SK-N-SH (cell line): ENCODE measurements at regions of chr17 and their contacts with region 1.

Region 1: GRCh38 chr17:43760254-43760852 is 1.8 kb upstream of the SOST start:
- DNase-seq: peak; percentile 94
- H3K4me3 ChIP-seq: peak overlapping the region in 1 of 2 experiments; percentile 45; a peak in 1 of 4 replicates
- H3K27ac ChIP-seq: no peak overlapping the region
- H3K4me1 ChIP-seq: peaks cover 0 to 6% of the 10 kb centered on the region in 2 experiments; a peak in 1 of 4 replicates
- H3K27me3 ChIP-seq: no peaks in the 10 kb centered on the region
- CTCF ChIP-seq: peak; percentile 99
- EP300 ChIP-seq: no peak
- RAD21 ChIP-seq: peak; percentile 100

Region 2: GRCh38 chr17:43720311-43721060 is 39.9 kb before region 1 on chr17:
- CTCF ChIA-PET with region 1: interaction called, 11 read pairs
- POLR2A ChIA-PET with region 1: no interaction called
- DNase-seq: peak; percentile 93
- H3K4me3 ChIP-seq: peak overlapping the region; percentile 47 to 51
- H3K27ac ChIP-seq: peak overlapping the region in 1 of 2 experiments; percentile 60; a peak in 1 of 4 replicates
- H3K4me1 ChIP-seq: peaks cover 4 to 5% of the 10 kb centered on the region in 2 experiments; a peak in 2 of 4 replicates
- H3K27me3 ChIP-seq: no peaks in the 10 kb centered on the region
- CTCF ChIP-seq: no peak
- EP300 ChIP-seq: no peak
- RAD21 ChIP-seq: no peak

Region 3: DNA sequence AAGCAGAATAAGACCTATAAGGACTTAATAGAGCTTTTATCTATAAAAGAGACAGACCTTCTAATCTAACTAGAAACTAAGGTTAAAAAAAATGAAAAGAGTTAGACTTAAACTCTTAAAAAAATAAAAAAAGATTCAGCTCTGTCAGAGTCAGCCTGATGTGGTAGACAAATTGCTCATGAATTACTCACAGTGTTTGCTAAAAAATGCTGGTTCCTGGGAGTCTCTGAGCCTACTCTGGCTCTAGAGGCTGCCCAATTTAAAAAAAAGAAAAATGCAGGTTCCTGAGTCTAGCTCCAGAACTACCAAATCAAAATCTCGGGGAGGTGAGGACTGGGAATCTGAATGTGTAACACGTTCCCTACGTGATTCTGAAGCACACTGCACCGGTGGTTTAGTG is 19.8 kb before region 1 on chr17:
- CTCF ChIA-PET with region 1: interaction called, 54 read pairs
- POLR2A ChIA-PET with region 1: no interaction called
- DNase-seq: no peak
- H3K4me3 ChIP-seq: no peak overlapping the region
- H3K27ac ChIP-seq: peak overlapping the region in 1 of 2 experiments; percentile 61; a peak in 2 of 4 replicates
- H3K4me1 ChIP-seq: 0 out of 4 replicates have a peak, but pooled peaks cover 0 to 3% of the 10 kb centered on the region in 2 experiments
- H3K27me3 ChIP-seq: no peaks in the 10 kb centered on the region
- CTCF ChIP-seq: no peak
- EP300 ChIP-seq: no peak
- RAD21 ChIP-seq: no peak

Region 4: GRCh38 chr17:43750154-43750553 is 10.2 kb before region 1 on chr17:
- CTCF ChIA-PET with region 1: interaction called, 54 read pairs
- POLR2A ChIA-PET with region 1: interaction called, 3 read pairs
- DNase-seq: no peak
- H3K4me3 ChIP-seq: no peak overlapping the region
- H3K27ac ChIP-seq: no peak overlapping the region
- H3K4me1 ChIP-seq: no peaks in the 10 kb centered on the region; a peak in 1 of 4 replicates
- H3K27me3 ChIP-seq: no peaks in the 10 kb centered on the region
- CTCF ChIP-seq: no peak
- EP300 ChIP-seq: no peak
- RAD21 ChIP-seq: no peak

Region 5: DNA sequence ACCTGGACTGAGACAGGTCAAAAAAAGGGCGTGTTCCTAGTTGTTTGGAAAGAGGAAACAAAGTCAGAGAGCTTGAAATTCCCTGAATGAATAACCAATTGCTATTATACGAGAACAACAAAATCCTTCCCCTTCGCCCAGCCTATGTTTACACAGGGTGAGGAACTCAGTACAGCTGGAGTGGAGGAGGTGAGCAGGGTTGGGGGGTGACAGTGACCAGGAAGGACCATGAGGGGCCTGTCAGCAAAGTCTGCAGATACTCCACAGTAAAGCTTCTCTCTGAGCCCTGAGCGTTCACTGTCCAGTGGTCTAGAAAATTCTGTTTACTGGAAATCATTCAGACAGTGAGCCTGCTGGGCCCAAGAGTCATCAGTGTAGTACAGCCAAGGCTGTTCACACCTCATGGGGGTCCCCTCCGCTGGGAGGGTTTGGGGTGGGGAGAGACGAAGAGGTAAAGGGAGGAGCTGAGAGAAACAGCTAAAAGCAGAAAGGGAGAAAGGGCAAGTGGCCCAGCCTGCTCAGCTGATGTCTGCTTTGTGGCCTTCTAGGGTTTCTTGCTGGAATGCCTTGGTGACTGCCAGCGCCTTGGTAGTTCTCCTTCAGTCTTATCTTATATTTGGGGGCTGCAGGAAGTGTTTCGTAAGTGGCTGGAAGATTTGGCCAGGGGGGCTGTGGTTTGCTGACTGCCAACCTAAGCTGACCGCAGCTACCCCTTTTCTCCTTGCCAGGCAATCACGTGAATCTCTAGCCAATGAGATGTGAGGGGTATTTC is 12.7 kb after region 1 on chr17:
- CTCF ChIA-PET with region 1: interaction called, 19 read pairs
- POLR2A ChIA-PET with region 1: no interaction called
- DNase-seq: no peak
- H3K4me3 ChIP-seq: no peak overlapping the region
- H3K27ac ChIP-seq: no peak overlapping the region
- H3K4me1 ChIP-seq: peaks cover 2 to 8% of the 10 kb centered on the region in 2 experiments; a peak in 1 of 4 replicates
- H3K27me3 ChIP-seq: no peaks in the 10 kb centered on the region
- CTCF ChIP-seq: no peak
- EP300 ChIP-seq: no peak
- RAD21 ChIP-seq: no peak

Region 6: GRCh38 chr17:43778337-43779144 is 18.2 kb after region 1 on chr17 and contains the start of gene DUSP3:
- CTCF ChIA-PET with region 1: interaction called, 17 read pairs
- POLR2A ChIA-PET with region 1: interaction called, 3 read pairs
- DNase-seq: peak; percentile 97
- H3K4me3 ChIP-seq: peak within 1 kb of the TSS; percentile 77 to 84
- H3K27ac ChIP-seq: peak within 1 kb of the TSS; percentile 90 to 95
- H3K4me1 ChIP-seq: peaks cover 8% of the 10 kb centered on the region in 2 experiments; a peak in 1 of 4 replicates
- H3K27me3 ChIP-seq: no peaks in the 10 kb centered on the region
- CTCF ChIP-seq: no peak
- EP300 ChIP-seq: no peak
- RAD21 ChIP-seq: no peak
- polyA plus RNA-seq, gene DUSP3: 31.5 and 39.7 TPM in 2 replicates

Region 7: GRCh38 chr17:43840814-43841213 is 80.5 kb after region 1 on chr17:
- CTCF ChIA-PET with region 1: interaction called, 10 read pairs
- POLR2A ChIA-PET with region 1: no interaction called
- DNase-seq: peak; percentile 82
- H3K4me3 ChIP-seq: no peak overlapping the region
- H3K27ac ChIP-seq: no peak overlapping the region
- H3K4me1 ChIP-seq: peaks cover 0 to 10% of the 10 kb centered on the region in 2 experiments; a peak in 1 of 4 replicates
- H3K27me3 ChIP-seq: no peaks in the 10 kb centered on the region
- CTCF ChIP-seq: peak; percentile 44
- EP300 ChIP-seq: no peak
- RAD21 ChIP-seq: peak; percentile 52